Right lobe of liver (tissue), 6 donors: ENCODE measurements at regions of chr11 and their contacts with region 1.

Region 1: GRCh38 chr11:122505304-122506006 is 150.1 kb upstream of the UBASH3B start:
- DNase-seq: peak; percentile 72 to 77 (median 77)
- ATAC-seq: peak; percentile 100
- H3K4me3 ChIP-seq: no peak overlapping the region
- H3K27ac ChIP-seq: no peak overlapping the region
- H3K4me1 ChIP-seq: no peaks in the 10 kb centered on the region
- H3K27me3 ChIP-seq: no peaks in the 10 kb centered on the region
- CTCF ChIP-seq: peak; percentile 79 to 91 (median 86)
- POLR2A ChIP-seq: no peak

Region 2: DNA sequence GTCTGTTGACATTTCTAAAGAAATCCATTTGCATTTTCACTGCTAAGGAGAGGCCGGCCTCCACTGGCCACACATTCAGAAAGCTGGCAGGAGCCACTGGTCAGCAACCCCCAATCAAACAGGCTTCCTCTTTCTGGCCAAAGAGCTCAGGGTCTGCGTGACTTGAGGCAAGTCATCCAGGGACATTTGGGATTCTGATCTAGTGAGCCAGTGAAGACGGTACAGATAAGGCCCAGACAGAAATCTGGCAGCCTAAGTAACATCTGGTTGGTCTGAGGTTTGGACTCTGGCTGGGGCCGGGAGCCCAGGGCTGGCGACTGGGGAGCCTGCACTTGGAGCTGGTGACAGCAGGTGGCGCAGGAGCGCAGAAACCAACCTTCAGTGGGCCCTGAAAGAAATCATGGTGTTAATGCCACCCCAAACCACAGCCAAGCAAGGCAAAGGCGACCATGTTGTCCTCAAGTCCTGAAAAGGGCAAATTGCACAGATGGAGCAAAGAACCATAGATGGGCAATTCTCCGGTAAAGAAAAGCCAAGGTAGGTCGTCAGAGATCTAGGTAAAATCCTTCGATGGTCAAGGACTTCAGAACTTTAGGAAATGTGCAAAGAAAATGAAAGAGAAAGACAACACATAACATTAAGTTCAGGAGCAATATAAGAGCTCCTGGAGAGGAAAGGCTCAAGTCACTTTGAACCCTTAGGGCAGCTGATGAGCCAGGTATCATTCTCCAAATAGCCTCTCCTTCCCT is 290.0 kb before region 1 on chr11:
- intact Hi-C with region 1: loop called in 1 of 2 experiments (anchors 5 kb)
- DNase-seq: peak; percentile 76 to 88 (median 80)
- ATAC-seq: peak; percentile 99 to 100 (median 99)
- H3K4me3 ChIP-seq: no peak overlapping the region
- H3K27ac ChIP-seq: no peak overlapping the region
- H3K4me1 ChIP-seq: peaks cover 0 to 12% (median 2%) of the 10 kb centered on the region in 4 donors
- H3K27me3 ChIP-seq: no peaks in the 10 kb centered on the region
- CTCF ChIP-seq: peak; percentile 85 to 93 (median 90)
- POLR2A ChIP-seq: no peak